Common myeloid progenitor, CD34-positive (primary cell): ENCODE measurements at regions of chr2 and their contacts with region 1.

Region 1: GRCh38 chr2:88451811-88452565 is 505 bp downstream of the FOXI3 start:
- DNase-seq: peak; percentile 39 to 79 (median 79)
- H3K4me3 ChIP-seq: peak overlapping the region in 5 of 7 experiments; percentile 6 to 55 (median 31)
- H3K27ac ChIP-seq: no peak overlapping the region
- H3K4me1 ChIP-seq: peaks cover 3 to 9% (median 5%) of the 10 kb centered on the region in 4 experiments
- H3K27me3 ChIP-seq: peaks cover 26 to 93% (median 40%) of the 10 kb centered on the region in 5 experiments

Region 2: DNA sequence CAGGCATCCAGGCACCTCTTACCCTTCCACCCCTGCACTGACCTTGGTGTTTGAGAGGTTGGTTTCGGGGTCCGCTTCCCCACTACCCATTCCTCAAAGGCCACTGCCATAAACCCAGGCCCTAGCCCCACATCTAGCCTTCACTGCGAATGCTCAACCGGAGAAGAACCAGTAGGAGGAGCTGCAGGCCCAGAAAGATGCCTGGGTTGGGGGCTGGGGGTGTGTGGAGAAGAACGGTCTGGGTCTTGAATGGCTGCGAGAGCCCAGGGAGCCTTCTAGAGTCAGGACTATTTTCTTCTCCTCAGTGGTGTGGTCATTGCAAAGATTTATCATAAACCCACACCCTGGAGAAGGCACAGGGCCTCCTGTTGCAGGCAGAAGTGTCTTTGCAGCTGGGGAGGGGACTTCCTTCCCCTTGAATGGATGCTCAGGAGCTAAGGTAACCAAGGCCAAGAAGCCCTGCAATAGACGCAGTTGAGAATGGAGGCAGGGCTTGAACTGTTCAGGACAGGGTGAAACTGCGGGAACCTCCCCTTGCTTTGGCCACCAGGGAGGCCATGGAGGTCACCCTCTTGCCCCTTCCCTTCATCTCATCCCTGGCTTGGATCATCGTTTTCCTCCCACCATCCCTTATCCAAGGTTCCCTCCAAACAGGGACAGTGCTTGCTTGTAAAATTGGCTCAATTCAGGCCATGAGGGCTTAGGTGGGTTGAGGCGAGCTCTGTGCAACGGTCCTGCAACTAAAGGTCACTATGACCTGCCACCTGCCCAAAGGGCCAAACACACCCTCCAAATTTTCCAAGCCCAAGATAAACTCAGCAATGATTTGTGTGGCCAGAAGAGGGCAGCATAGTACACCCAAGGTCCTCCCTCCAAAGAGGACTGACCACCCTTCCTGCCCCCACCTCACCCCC is 260.9 kb before region 1 on chr2:
- CTCF ChIA-PET with region 1: interaction called, 12 read pairs
- POLR2A ChIA-PET with region 1: no interaction called
- DNase-seq: peak; percentile 46 to 71 (median 66)
- H3K4me3 ChIP-seq: no peak overlapping the region
- H3K27ac ChIP-seq: no peak overlapping the region
- H3K4me1 ChIP-seq: peaks cover 0 to 5% (median 0%) of the 10 kb centered on the region in 4 experiments
- H3K27me3 ChIP-seq: peaks cover 0 to 4% (median 0%) of the 10 kb centered on the region in 5 experiments

Region 3: DNA sequence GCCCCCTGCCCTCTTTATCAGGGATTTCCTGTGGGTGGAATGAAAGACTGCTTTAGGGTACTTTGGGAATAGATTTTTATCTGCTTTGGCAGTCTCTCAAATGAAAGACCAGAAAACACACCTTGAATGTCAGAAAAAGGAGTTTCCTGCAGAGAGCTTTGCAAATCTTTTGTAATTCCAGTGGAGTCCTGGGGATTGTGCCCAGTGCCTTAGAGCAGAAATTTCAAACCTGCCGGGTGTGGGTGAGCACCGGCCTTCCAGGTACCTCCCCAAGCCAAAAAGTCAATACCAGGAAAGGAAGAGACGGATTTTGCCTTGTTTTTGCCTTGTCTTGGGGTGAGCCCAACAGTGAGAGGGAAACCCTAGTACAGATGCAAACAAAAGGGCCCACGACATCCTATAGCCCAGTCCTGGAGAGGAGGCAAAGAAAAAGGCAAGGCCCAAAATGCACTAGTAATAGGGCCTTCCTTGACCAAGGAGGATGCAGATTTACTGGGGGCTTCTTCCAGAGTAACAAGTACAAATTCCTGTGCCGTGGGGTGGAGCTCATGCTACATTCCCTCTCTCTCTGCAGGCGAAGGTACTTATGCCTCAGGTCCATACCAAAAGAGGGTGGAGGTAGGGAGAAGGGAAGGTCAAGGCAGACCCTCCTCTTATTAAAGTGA is 35.8 kb before region 1 on chr2:
- CTCF ChIA-PET with region 1: no interaction called
- POLR2A ChIA-PET with region 1: no interaction called
- DNase-seq: no peak
- H3K4me3 ChIP-seq: no peak overlapping the region
- H3K27ac ChIP-seq: no peak overlapping the region
- H3K4me1 ChIP-seq: no peaks in the 10 kb centered on the region
- H3K27me3 ChIP-seq: peaks cover 2 to 14% (median 3%) of the 10 kb centered on the region in 5 experiments

Region 4: DNA sequence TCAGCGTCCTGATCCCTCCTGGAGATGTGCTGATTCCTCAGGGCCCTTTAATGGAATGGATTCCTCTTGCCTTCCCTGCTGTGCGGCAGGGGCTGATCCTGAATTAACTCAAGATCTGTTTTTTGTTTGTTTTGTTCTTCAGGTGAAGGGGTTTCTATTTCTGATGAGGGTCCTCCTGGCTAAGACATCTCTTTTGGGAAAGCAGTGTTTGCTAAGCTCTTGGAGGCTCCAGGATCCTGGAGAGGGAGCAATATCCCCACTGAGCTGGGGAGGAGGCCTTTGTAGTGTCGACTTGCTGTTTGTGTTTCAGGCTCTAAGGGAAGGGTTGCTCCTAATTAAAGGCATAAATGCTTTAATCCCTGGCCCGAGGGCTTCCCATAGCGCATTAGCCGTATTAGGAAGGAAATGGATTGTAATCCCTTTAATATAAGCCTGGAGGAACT is 65.8 kb after region 1 on chr2:
- CTCF ChIA-PET with region 1: no interaction called
- POLR2A ChIA-PET with region 1: no interaction called
- DNase-seq: no peak
- H3K4me3 ChIP-seq: no peak overlapping the region
- H3K27ac ChIP-seq: no peak overlapping the region
- H3K4me1 ChIP-seq: no peaks in the 10 kb centered on the region
- H3K27me3 ChIP-seq: peaks cover 0 to 2% (median 0%) of the 10 kb centered on the region in 5 experiments